Transverse colon (tissue), 4 donors: ENCODE measurements at regions of chr21 and their contacts with region 1.

Region 1: GRCh38 chr21:21714426-21714825 is 716.2 kb downstream of the NCAM2 start:
- DNase-seq: no peak
- H3K4me3 ChIP-seq: no peak overlapping the region
- H3K27ac ChIP-seq: no peak overlapping the region
- H3K4me1 ChIP-seq: no peaks in the 10 kb centered on the region
- H3K27me3 ChIP-seq: no peaks in the 10 kb centered on the region
- CTCF ChIP-seq: no peak
- EP300 ChIP-seq: no peak
- POLR2A ChIP-seq: no peak

Region 2: GRCh38 chr21:21751286-21751685 is 36.9 kb after region 1 on chr21:
- in situ Hi-C with region 1: no loop called
- intact Hi-C with region 1: loop called (anchors 1 kb)
- DNase-seq: peak; percentile 20
- H3K4me3 ChIP-seq: no peak overlapping the region
- H3K27ac ChIP-seq: no peak overlapping the region
- H3K4me1 ChIP-seq: no peaks in the 10 kb centered on the region
- H3K27me3 ChIP-seq: no peaks in the 10 kb centered on the region
- CTCF ChIP-seq: peak in 1 of 5 experiments; percentile 57
- EP300 ChIP-seq: no peak
- POLR2A ChIP-seq: no peak